SK-N-SH (cell line): ENCODE measurements at regions of chr15 and their contacts with region 1.

Region 1: GRCh38 chr15:99704444-99704838 is 28.8 kb downstream of the LYSMD4 start:
- DNase-seq: peak; percentile 65
- H3K4me3 ChIP-seq: no peak overlapping the region; a peak in 1 of 4 replicates
- H3K27ac ChIP-seq: peak overlapping the region in 1 of 2 experiments; percentile 80; a peak in 2 of 4 replicates
- H3K4me1 ChIP-seq: peaks cover 19 to 33% of the 10 kb centered on the region in 2 experiments
- H3K27me3 ChIP-seq: no peaks in the 10 kb centered on the region
- CTCF ChIP-seq: peak; percentile 77
- EP300 ChIP-seq: no peak
- RAD21 ChIP-seq: peak; percentile 91

Region 2: GRCh38 chr15:99224372-99225214 is 479.8 kb before region 1 on chr15:
- CTCF ChIA-PET with region 1: no interaction called
- POLR2A ChIA-PET with region 1: no interaction called
- DNase-seq: no peak
- H3K4me3 ChIP-seq: no peak overlapping the region
- H3K27ac ChIP-seq: no peak overlapping the region
- H3K4me1 ChIP-seq: no peaks in the 10 kb centered on the region
- H3K27me3 ChIP-seq: no peaks in the 10 kb centered on the region
- CTCF ChIP-seq: no peak
- EP300 ChIP-seq: no peak
- RAD21 ChIP-seq: no peak

Region 3: DNA sequence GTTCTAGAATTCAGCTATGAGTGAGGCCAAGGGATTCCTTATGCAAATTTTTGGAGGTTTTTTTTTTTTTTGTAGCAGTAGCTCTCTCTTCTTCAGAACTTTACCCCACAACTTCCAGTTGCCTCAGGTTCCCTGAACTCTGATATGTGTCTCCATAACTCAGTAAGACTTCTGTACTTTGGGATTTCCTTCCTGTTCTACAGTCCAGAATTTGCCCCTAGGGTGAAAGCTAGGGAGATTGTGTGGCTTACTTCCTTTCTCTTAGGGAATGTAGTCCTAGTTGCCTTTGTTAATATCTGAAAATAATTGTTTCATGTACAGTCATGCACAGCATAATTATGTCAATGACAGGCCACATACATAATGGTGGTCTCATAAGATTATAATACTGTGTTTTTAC is 422.3 kb before region 1 on chr15:
- CTCF ChIA-PET with region 1: interaction called, 132 read pairs
- POLR2A ChIA-PET with region 1: no interaction called
- DNase-seq: no peak
- H3K4me3 ChIP-seq: no peak overlapping the region
- H3K27ac ChIP-seq: no peak overlapping the region
- H3K4me1 ChIP-seq: peaks cover 0 to 8% of the 10 kb centered on the region in 2 experiments; a peak in 2 of 4 replicates
- H3K27me3 ChIP-seq: no peaks in the 10 kb centered on the region
- CTCF ChIP-seq: no peak
- EP300 ChIP-seq: no peak
- RAD21 ChIP-seq: no peak

Region 4: DNA sequence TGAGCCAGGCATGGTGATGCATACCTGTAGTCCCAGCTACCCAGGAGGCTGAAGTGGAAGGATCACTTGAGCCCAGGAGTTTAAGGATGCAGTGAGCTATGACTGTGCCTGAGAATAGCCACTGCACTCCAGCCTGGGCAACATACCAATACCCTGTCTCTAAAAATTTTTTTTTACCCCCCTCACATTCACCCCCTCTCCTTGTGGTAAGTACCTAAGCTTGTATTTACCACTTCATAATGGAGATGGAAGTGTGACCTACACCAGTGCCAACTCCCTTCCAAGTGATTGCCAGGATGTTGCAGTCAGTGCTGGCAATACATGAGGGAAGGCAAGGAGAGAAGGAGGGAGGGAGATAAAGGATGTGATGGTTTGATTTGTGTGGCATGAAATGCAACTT is 368.9 kb before region 1 on chr15:
- CTCF ChIA-PET with region 1: interaction called, 15 read pairs
- POLR2A ChIA-PET with region 1: no interaction called
- DNase-seq: no peak
- H3K4me3 ChIP-seq: no peak overlapping the region
- H3K27ac ChIP-seq: no peak overlapping the region
- H3K4me1 ChIP-seq: peaks cover 0 to 11% of the 10 kb centered on the region in 2 experiments; a peak in 1 of 4 replicates
- H3K27me3 ChIP-seq: no peaks in the 10 kb centered on the region
- CTCF ChIP-seq: no peak
- EP300 ChIP-seq: no peak
- RAD21 ChIP-seq: no peak

Region 5: GRCh38 chr15:99414755-99415731 is 289.4 kb before region 1 on chr15:
- CTCF ChIA-PET with region 1: interaction called, 13 read pairs
- POLR2A ChIA-PET with region 1: no interaction called
- DNase-seq: peak; percentile 13
- H3K4me3 ChIP-seq: no peak overlapping the region
- H3K27ac ChIP-seq: no peak overlapping the region
- H3K4me1 ChIP-seq: no peaks in the 10 kb centered on the region
- H3K27me3 ChIP-seq: no peaks in the 10 kb centered on the region
- CTCF ChIP-seq: no peak
- EP300 ChIP-seq: no peak
- RAD21 ChIP-seq: no peak

Region 6: DNA sequence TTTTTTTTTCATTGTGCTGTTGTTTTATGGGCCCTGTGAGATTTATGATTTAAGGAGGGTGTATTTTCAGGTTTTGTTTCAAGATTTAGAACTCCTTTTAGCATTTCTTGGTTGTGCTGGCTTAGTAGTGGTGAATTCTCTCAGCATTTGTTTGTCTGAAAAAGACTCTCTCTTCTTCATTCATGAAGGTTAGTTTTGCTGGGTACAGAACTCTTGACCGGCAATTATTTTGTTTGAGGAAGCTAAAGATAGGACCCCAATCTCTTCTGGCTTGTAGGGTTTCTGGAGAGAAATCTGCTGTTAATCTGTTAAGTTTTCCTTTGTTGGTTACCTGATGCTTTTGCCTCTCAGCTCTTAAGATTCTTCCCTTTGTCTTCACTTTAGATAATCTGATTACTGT is 18.2 kb before region 1 on chr15:
- CTCF ChIA-PET with region 1: interaction called, 29 read pairs
- POLR2A ChIA-PET with region 1: no interaction called
- DNase-seq: no peak
- H3K4me3 ChIP-seq: no peak overlapping the region
- H3K27ac ChIP-seq: no peak overlapping the region
- H3K4me1 ChIP-seq: peaks cover 0 to 10% of the 10 kb centered on the region in 2 experiments; a peak in 3 of 4 replicates
- H3K27me3 ChIP-seq: no peaks in the 10 kb centered on the region
- CTCF ChIP-seq: no peak
- EP300 ChIP-seq: no peak
- RAD21 ChIP-seq: no peak

Region 7: DNA sequence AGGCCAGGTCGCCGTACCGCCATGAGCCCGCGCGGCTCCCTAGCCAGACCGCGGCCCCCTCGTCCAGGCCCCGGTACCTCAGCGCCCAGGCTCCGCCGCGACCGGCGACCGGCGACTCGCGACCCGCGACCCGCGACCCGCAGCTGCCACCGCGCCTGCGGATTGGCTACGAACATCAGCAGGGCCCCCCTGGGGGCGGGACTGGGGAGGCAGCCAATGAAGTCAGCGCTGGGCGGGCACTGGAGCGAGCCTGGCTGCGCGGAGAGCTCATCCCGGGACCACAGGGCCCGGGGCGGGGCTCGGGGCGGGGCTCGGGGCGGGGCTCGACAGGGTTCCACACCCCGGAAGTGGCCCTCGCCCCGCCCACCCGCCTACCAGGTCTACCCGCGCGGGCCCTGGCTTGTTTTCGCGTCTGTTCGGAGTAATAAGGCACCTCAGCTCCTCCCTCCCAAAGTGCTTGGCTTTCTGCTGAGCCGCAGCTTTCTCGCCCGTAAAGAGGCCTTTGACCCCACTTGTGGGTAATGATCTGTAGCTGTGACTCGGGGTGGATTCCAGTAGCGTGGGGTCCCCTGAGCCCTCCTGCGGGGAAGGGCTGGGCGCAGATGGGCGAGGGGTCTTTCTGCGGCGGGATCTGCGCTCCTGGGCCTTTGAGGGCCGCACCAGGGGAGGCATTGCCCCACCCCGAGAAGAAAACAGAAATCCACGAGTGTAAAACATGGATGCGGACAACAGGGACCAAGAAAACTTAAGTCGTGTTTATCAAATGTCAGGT is 29.0 kb after region 1 on chr15 and contains the start of gene LYSMD4:
- CTCF ChIA-PET with region 1: interaction called, 28 read pairs
- POLR2A ChIA-PET with region 1: interaction called, 5 read pairs
- DNase-seq: peak; percentile 100
- H3K4me3 ChIP-seq: peak within 1 kb of the TSS; percentile 83 to 88
- H3K27ac ChIP-seq: peak within 1 kb of the TSS in 1 of 2 experiments; percentile 58; a peak in 1 of 4 replicates
- H3K4me1 ChIP-seq: peaks cover 0 to 10% of the 10 kb centered on the region in 2 experiments; a peak in 1 of 4 replicates
- H3K27me3 ChIP-seq: no peaks in the 10 kb centered on the region
- CTCF ChIP-seq: no peak
- EP300 ChIP-seq: no peak
- RAD21 ChIP-seq: no peak
- polyA plus RNA-seq, gene LYSMD4: 5.1 and 6.1 TPM in 2 replicates

Region 8: GRCh38 chr15:99744142-99744541 is 39.7 kb after region 1 on chr15:
- CTCF ChIA-PET with region 1: no interaction called
- POLR2A ChIA-PET with region 1: no interaction called
- DNase-seq: no peak
- H3K4me3 ChIP-seq: no peak overlapping the region
- H3K27ac ChIP-seq: no peak overlapping the region
- H3K4me1 ChIP-seq: no peaks in the 10 kb centered on the region
- H3K27me3 ChIP-seq: no peaks in the 10 kb centered on the region
- CTCF ChIP-seq: no peak
- EP300 ChIP-seq: no peak
- RAD21 ChIP-seq: no peak

Region 9: DNA sequence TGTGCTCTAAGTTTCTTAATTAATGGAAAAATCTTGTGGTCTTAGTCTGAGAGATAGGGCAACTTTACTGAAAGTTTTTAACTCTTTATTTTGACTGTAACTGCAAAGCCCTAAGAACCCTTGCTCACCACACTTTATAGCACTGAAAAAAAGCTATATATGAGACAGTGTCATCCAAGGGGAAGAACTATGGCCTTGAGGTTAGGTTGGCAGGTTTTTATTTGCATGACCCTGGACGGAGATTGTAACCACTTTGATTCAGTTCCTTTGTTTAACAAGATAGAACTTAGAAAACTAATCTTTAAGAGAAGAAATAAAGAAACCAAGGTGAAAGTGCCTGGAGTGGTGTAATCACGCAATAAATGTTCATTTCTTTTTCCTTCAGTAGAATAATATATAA is 59.4 kb after region 1 on chr15:
- CTCF ChIA-PET with region 1: no interaction called
- POLR2A ChIA-PET with region 1: no interaction called
- DNase-seq: no peak
- H3K4me3 ChIP-seq: no peak overlapping the region
- H3K27ac ChIP-seq: no peak overlapping the region
- H3K4me1 ChIP-seq: no peaks in the 10 kb centered on the region
- H3K27me3 ChIP-seq: no peaks in the 10 kb centered on the region
- CTCF ChIP-seq: no peak
- EP300 ChIP-seq: no peak
- RAD21 ChIP-seq: no peak